Heart left ventricle (tissue), 16 donors: ENCODE measurements at regions of chr1 and their contacts with region 1.

Region 1: DNA sequence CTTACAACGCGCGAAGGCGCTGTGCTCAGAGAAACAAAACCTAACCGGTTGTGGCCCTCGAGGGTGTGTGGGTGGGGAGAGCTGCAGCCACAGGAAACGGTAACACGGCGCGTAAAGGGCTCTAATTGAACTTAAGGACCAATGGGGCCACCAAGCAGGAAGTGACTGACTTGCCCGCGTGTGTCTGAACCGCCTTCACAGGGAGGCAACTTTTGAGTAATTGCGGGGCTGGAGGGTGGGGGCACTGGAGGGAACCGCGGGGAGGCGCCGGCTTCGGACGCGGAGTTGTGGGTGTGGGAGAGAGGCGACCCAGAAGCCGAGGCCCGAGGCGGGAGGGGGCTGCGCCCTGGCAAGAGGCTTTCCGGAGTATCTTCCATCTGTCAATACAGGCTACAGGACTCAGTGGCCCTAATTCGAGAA is 577 bp upstream of the PNRC2 start:
- DNase-seq: peak; percentile 88 to 92 (median 90)
- ATAC-seq: peak; percentile 50 to 81 (median 80)
- H3K4me3 ChIP-seq: peak overlapping the region; percentile 56 to 98 (median 84)
- H3K27ac ChIP-seq: peak overlapping the region; percentile 94 to 100 (median 99)
- H3K4me1 ChIP-seq: peaks cover 0 to 51% (median 23%) of the 10 kb centered on the region in 12 donors
- H3K27me3 ChIP-seq: no peaks in the 10 kb centered on the region
- CTCF ChIP-seq: peak in 8 of 12 donors; percentile 17 to 70 (median 51)
- POLR2A ChIP-seq: no peak

Region 2: DNA sequence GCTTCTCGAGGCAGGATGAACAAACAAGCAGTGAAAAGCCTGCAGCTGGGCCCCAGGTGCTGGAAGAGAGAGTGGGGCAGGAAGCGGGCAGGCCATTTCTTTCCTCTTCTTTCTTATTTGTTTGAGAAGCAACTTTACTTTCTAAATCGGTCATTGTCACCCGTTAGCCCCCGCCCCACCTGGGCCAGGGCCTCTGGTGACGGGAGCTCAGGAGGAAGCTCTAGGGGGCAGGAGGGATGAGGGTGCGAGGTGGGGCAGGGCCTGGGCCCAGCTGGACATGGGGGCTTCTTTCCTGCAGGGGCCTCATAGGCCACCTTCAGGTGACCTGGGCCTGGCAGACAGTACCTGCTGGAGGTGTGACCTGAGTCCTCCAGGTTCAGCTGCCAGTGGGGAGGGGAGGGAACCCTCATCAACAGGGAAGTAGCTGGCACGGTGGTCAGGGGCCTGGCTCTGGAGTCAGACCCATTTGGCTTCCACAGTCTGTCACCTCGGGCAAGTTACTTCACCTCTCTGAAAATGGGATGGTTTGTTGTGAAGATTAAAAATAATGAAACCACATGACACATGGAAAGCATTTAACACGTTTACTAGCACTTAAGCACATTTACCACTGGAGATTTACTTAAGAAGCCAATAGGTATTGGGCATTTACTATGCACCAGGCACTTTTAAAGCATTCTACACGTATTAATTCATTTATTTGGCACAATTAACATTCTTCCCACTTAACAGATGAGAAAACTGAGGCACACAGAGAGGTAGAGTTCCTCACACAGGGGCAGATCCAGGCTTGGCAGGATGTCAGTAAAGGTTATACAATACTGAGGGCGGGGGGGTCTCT is 345.6 kb before region 1 on chr1:
- intact Hi-C with region 1: no loop called
- DNase-seq: no peak
- ATAC-seq: no peak
- H3K4me3 ChIP-seq: no peak overlapping the region
- H3K27ac ChIP-seq: peak overlapping the region in 1 of 12 donors; percentile 53
- H3K4me1 ChIP-seq: peaks cover 0 to 12% (median 0%) of the 10 kb centered on the region in 12 donors
- H3K27me3 ChIP-seq: no peaks in the 10 kb centered on the region
- CTCF ChIP-seq: no peak
- POLR2A ChIP-seq: no peak

Region 3: DNA sequence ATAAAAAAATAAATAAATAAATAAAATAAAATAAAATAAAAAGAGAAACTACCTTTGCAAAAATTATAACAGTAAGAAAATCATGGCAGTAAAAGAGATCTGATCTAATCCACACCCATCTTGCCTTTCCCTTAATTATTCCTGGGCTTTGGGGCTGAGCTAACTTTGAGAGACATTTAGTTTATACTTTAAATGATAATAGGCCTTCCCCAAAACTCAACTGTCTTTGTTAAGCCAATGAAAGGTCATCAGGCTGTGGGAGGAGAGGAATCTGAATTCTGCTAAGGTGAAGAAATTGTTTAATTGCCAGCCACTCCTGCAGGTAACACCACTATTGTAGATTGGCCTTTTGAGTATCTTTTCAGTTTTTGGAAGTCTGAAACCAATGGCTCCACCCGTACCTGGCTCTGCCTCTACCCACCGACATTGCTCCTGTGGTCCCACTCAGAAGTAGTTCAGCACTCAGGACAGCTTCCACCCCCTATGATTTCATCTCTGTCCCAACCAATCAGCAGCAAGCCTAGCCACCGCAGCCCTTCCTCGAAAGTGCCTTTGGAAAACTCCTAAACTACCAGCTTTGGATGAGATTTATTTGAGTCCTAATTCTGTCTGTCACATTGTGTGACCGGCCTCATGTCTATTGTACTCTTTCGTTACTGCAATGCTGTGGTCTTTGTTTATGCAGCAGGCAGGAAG is 22.4 kb before region 1 on chr1:
- intact Hi-C with region 1: no loop called
- DNase-seq: no peak
- ATAC-seq: no peak
- H3K4me3 ChIP-seq: no peak overlapping the region
- H3K27ac ChIP-seq: no peak overlapping the region
- H3K4me1 ChIP-seq: no peaks in the 10 kb centered on the region
- H3K27me3 ChIP-seq: no peaks in the 10 kb centered on the region
- CTCF ChIP-seq: no peak
- POLR2A ChIP-seq: no peak

Region 4: GRCh38 chr1:23979878-23980724 is 21.1 kb after region 1 on chr1 and contains the start of gene SRSF10:
- intact Hi-C with region 1: loop called in 4 of 10 experiments (anchors 1 to 2 kb)
- DNase-seq: peak; percentile 99
- ATAC-seq: peak; percentile 98 to 100 (median 99)
- H3K4me3 ChIP-seq: peak within 1 kb of the TSS; percentile 69 to 97 (median 90)
- H3K27ac ChIP-seq: peak within 1 kb of the TSS; percentile 85 to 99 (median 97)
- H3K4me1 ChIP-seq: peaks cover 5 to 55% (median 40%) of the 10 kb centered on the region in 12 donors
- H3K27me3 ChIP-seq: no peaks in the 10 kb centered on the region
- CTCF ChIP-seq: peak; percentile 14 to 79 (median 40)
- POLR2A ChIP-seq: peak; percentile 95 to 97
- total RNA-seq, gene SRSF10: 34.3 to 60.9 (median 49.4) TPM

Region 5: DNA sequence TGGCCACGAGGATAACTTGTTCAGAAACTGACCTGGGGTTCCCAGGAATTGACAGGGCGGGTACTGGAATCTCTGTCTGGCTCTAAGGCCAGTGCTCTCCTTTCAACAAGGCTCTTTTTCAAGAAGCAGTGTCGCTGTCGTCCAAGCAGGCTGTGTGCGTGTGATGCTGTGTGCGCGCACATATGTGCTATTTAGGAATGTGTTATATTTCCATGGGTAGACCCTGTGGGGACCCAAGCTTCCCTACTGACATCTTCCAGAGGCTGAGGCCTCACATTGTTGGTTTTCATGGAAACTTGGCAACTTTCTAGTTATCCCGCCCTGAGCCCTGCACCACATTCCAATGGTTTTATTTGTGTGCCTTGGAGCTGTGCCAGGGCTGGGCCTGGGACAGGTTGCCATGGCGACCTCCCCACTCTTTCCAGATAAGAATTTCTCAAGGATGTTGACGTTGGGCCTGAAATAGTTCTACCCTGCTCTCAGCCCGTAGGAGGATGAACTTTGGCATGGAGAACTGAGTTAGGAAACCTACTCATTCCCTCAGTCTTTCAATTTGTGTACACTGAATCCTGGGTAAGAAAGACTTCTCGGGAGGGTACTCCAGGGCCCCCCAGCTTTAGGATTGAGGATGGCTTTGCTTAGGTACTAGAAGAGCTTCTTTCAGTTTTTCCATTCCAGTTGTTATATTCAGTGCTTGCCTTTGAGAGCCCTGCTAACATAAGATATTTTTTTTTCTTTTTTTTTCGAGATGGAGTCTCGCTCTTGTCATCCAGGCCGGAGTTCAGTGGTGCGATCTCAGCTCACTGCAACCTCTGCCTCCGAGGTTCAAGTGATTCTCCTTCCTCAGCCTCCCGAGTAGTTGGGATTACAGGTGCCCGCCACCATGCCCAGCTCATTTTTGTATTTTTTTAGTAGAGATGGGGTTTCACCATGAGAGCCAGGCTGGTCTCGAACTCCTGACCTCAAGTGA is 59.8 kb after region 1 on chr1:
- intact Hi-C with region 1: loop called in 3 of 10 experiments (anchors 2 to 5 kb)
- DNase-seq: peak; percentile 94 to 98 (median 97)
- ATAC-seq: peak; percentile 87 to 90 (median 88)
- H3K4me3 ChIP-seq: peak overlapping the region in 4 of 12 donors; percentile 1 to 29 (median 24)
- H3K27ac ChIP-seq: peak overlapping the region; percentile 78 to 95 (median 90)
- H3K4me1 ChIP-seq: peaks cover 3 to 85% (median 59%) of the 10 kb centered on the region in 12 donors
- H3K27me3 ChIP-seq: no peaks in the 10 kb centered on the region
- CTCF ChIP-seq: peak in 1 of 12 donors; percentile 5
- POLR2A ChIP-seq: peak in 1 of 2 donors; percentile 30

Region 6: DNA sequence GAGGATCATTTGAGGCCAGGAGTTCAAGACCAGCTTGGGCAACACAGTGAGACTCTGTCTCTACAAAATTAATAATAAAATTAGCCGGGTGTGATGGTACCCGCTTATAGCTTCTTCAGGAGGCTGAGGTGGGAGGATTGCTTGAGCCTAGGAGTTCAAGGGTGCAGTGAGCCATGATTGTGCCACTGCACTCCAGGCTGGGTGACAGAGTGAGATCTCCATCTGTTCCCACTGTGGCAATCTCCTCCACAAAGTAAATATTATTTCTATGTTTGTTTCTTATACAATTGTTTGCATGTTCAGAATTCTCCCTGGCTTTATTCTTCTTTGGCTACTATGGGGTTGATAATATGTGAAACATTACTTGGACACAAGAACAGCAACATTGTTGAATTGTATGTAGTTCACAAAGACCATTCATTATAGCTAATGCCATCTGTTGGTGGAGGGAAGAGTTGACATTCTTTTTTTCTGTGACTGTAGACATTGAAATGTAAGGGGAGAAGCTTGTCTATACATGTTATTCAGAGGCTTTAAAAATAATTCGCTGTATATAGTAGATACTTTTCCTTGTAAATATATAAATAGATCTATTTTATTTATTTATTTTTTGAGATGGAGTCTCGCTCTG is 68.9 kb after region 1 on chr1:
- intact Hi-C with region 1: loop called in 7 of 10 experiments (anchors 2 to 5 kb)
- DNase-seq: no peak
- ATAC-seq: peak in 3 of 4 donors; percentile 57 to 77 (median 73)
- H3K4me3 ChIP-seq: no peak overlapping the region
- H3K27ac ChIP-seq: no peak overlapping the region
- H3K4me1 ChIP-seq: peaks cover 0 to 10% (median 2%) of the 10 kb centered on the region in 12 donors
- H3K27me3 ChIP-seq: no peaks in the 10 kb centered on the region
- CTCF ChIP-seq: peak; percentile 44 to 81 (median 72)
- POLR2A ChIP-seq: no peak

Region 7: GRCh38 chr1:24111996-24112779 is 153.1 kb after region 1 on chr1 and contains the start of gene MYOM3:
- intact Hi-C with region 1: loop called in 2 of 10 experiments (anchors 5 kb)
- DNase-seq: peak in 4 of 5 donors; percentile 74 to 89 (median 85)
- ATAC-seq: peak; percentile 77 to 82 (median 79)
- H3K4me3 ChIP-seq: peak within 1 kb of the TSS; percentile 29 to 62 (median 53)
- H3K27ac ChIP-seq: peak within 1 kb of the TSS; percentile 76 to 100 (median 95)
- H3K4me1 ChIP-seq: peaks cover 0 to 45% (median 8%) of the 10 kb centered on the region in 12 donors
- H3K27me3 ChIP-seq: peaks cover 0 to 7% (median 0%) of the 10 kb centered on the region in 9 donors
- CTCF ChIP-seq: peak; percentile 14 to 72 (median 54)
- POLR2A ChIP-seq: peak in 1 of 2 donors; percentile 69
- total RNA-seq, gene MYOM3: 230 to 379 (median 288) TPM